ENCODE measurements at regions of chr22 and their contacts with region 1.

Region 1: DNA sequence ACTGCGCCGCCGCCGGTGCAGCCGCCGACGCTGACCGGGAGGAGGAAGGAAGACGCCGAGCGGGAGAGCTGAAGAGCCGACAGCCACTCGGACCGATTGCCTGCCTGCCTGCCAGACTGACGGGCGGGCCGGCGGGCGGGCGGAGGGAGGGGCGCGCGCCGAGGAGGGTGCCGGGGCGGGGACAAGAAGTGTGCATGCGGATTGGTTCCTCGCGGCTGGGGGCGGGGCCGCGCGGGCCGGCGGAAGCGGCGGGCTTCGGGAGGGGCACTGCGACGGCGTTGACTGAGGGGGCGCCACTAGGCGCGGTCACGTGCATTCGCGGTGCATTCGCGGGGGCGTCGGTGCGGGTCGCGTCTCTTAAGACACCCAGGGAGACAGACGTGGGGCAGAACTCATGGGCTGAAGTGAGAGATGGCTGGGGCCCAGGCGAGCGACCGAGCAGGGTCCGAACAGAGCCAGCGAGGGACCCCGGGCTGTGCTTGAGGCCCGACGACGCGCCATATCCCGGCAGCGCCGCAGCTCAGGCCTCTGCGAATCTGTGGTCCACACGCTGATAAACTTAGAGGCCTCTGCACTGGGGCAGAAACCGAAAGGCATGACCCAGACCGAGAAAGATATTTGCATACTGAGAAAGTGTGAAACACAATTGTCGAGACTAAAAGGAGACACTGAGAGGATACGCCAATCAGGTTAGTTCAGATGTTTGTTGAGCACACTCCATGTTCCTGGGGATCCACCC is at the start of gene MAPK1:
- DNase-seq: peak; percentile 94 to 98 (median 97)
- ATAC-seq: peak; percentile 99
- H3K4me3 ChIP-seq: peak within 1 kb of the TSS; percentile 89
- H3K27ac ChIP-seq: peak within 1 kb of the TSS; percentile 80
- H3K4me1 ChIP-seq: peaks cover under 1% of the 10 kb centered on the region
- H3K27me3 ChIP-seq: no peaks in the 10 kb centered on the region
- total RNA-seq, gene MAPK1: 116 to 126 (median 123) TPM

Region 2: DNA sequence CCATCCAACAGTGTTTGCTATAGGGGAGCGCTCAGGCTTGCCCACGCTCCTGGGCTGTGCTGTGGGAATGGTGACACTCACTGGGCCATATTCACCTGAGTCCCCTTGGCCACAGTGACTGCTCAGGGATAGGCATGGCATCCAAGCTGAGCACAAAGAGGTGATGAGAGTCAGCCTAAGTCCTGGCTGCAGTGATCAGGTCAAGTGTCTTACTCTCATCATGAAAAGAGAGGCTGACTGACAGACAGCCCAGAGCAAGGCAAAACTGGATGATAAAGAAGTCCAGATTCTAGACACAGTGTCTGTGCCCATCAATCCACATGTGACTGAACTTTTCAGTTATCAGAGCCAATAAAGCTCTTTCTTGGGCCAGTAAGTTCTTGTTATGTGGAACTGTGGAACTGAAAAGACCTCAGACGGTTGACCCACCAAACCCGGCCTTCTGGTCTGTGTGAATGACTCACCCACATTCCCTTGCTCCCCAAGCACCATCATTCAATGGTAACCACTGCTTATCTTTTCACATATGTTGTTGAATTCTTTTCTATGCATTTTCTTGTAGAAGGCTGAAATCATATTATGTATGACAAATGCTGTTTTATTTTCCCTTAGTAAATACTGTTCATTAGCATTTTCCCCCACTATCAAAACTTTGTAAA is 88.9 kb before region 1 on chr22:
- intact Hi-C with region 1: loop called in 2 of 4 experiments (anchors 10 kb)
- DNase-seq: no peak
- ATAC-seq: no peak
- H3K4me3 ChIP-seq: no peak overlapping the region
- H3K27ac ChIP-seq: no peak overlapping the region
- H3K4me1 ChIP-seq: no peaks in the 10 kb centered on the region
- H3K27me3 ChIP-seq: no peaks in the 10 kb centered on the region

Region 3: GRCh38 chr22:21807544-21808529 is 59.9 kb before region 1 on chr22:
- intact Hi-C with region 1: loop called in 2 of 4 experiments (anchors 10 kb)
- DNase-seq: no peak
- ATAC-seq: no peak
- H3K4me3 ChIP-seq: no peak overlapping the region
- H3K27ac ChIP-seq: no peak overlapping the region
- H3K4me1 ChIP-seq: peaks cover 3% of the 10 kb centered on the region
- H3K27me3 ChIP-seq: no peaks in the 10 kb centered on the region

Region 4: DNA sequence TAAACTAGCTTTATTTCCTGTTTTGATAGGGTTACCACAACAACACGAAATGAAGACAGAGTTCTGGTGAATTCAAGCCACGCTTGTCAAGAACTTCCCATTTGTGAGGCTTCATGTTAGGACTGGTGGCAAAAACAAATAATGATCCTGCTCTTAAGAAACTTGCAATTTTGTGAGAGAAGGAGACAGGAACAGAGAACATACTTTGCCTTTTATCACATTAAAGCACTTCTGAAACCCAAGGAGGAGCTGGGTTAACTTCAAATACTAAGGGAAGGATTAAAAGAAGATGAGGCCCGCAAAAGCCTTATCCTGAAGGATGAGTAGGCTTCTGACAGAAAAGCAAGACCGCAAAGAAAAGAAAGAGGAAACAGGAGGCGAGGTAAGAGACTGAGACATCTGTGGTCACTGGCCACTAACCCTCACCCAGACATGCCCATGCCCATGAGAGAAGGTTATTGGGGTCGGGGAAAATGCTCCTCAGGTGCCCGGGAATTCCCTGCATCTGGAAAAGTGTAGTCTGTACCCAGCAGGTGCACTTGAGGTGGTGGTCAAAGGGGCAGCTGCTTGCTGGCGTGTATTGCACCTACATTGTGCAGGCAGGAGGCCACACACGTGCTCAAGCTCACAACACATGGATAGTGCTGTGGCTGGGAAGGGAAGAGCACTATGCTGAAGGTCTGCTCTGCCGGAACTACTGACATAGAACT is 50.8 kb before region 1 on chr22:
- intact Hi-C with region 1: loop called in 1 of 4 experiments (anchors 10 kb)
- DNase-seq: no peak
- ATAC-seq: peak; percentile 81 to 91
- H3K4me3 ChIP-seq: no peak overlapping the region
- H3K27ac ChIP-seq: peak overlapping the region; percentile 64
- H3K4me1 ChIP-seq: peaks cover 14% of the 10 kb centered on the region
- H3K27me3 ChIP-seq: no peaks in the 10 kb centered on the region

Region 5: GRCh38 chr22:22009661-22010060 is 142.0 kb after region 1 on chr22:
- intact Hi-C with region 1: no loop called
- DNase-seq: no peak
- ATAC-seq: no peak
- H3K4me3 ChIP-seq: no peak overlapping the region
- H3K27ac ChIP-seq: no peak overlapping the region
- H3K4me1 ChIP-seq: no peaks in the 10 kb centered on the region
- H3K27me3 ChIP-seq: no peaks in the 10 kb centered on the region

Measured in right cardiac atrium (tissue), 5 donors.